Calu3 (cell line): ENCODE measurements at regions of chr11 and their contacts with region 1.

Region 1: DNA sequence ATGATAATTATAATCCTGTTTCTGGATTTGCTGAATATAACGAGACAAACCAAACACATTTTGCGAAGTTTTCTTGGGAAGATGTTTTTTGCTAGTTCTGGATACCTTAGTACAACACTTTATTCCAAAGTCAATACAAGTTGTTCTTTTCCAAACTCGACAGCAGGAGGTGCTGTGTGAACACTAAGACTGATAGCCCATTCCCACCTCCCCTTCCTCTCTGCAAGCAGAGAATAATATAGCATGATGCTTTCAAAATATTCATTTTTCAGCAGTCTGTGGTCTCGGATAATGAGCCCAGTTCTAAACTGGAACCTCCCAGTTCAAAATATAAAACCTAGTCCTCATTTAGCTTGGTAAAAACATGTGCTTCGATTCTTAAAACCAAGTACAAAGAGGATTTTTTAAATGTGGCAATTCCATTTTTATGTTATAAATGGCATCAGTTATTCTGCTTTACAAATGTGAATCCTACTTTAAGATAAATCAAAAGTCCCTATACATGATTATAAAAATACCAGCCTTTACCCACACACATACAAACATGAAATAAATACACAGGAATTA is 129.1 kb downstream of the DCDC1 start:
- DNase-seq: peak; percentile 37
- H3K4me3 Mint-ChIP-seq: no peak overlapping the region
- H3K27ac Mint-ChIP-seq: no peak overlapping the region
- H3K4me1 Mint-ChIP-seq: no peaks in the 10 kb centered on the region
- H3K27me3 Mint-ChIP-seq: no peaks in the 10 kb centered on the region
- CTCF ChIP-seq: peak; percentile 49

Region 2: GRCh38 chr11:31369348-31370329 is 129.2 kb after region 1 on chr11 and contains the starts of genes DCDC1 and DNAJC24:
- CTCF ChIA-PET with region 1: no interaction called
- intact Hi-C with region 1: loop called (anchors 2 kb)
- DNase-seq: peak; percentile 88
- H3K4me3 Mint-ChIP-seq: peak within 1 kb of the TSS; percentile 100
- H3K27ac Mint-ChIP-seq: peak within 1 kb of the TSS; percentile 97
- H3K4me1 Mint-ChIP-seq: no peaks in the 10 kb centered on the region
- H3K27me3 Mint-ChIP-seq: peaks cover 14% of the 10 kb centered on the region
- CTCF ChIP-seq: no peak
- total RNA-seq, gene DCDC1: 0.68 TPM in 1 of 2 replicates, not detected in the other
- total RNA-seq, gene DNAJC24: 14.9 and 17.9 TPM in 2 replicates

Region 3: DNA sequence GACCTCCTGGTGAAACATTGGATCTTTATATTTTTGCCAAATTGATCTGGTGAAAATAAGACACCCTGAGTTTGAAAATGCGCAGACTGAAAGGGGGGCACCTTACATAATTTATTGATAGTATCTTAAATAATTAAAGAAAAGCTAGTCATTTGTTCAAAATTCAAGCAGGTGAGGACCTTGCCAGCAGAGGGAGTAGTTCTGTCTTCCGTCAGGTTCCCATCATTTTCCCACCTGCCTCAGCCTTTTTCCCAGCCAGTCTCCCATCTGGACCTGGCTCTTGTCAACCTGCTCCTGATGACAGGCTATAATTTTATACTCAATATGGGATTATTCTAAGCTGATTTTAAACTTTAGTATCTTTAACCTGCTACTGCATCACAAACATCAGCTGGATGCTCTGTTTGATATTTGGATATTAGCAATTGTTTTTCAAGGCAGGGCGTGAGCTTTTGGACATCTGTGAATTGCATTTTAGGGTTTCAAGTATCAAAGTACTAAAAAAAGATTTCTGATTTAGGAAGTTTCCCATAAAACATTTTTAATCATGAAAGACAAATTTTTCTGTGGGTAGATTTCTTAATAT is 401.1 kb after region 1 on chr11:
- CTCF ChIA-PET with region 1: interaction called, 3 read pairs
- intact Hi-C with region 1: loop called (anchors 10 kb)
- DNase-seq: peak; percentile 55
- H3K4me3 Mint-ChIP-seq: no peak overlapping the region
- H3K27ac Mint-ChIP-seq: no peak overlapping the region
- H3K4me1 Mint-ChIP-seq: no peaks in the 10 kb centered on the region
- H3K27me3 Mint-ChIP-seq: no peaks in the 10 kb centered on the region
- CTCF ChIP-seq: peak; percentile 56

Region 4: GRCh38 chr11:32297611-32298011 is 1057.2 kb after region 1 on chr11:
- CTCF ChIA-PET with region 1: no interaction called
- intact Hi-C with region 1: loop called (anchors 5 kb)
- DNase-seq: peak; percentile 2
- H3K4me3 Mint-ChIP-seq: no peak overlapping the region
- H3K27ac Mint-ChIP-seq: no peak overlapping the region
- H3K4me1 Mint-ChIP-seq: no peaks in the 10 kb centered on the region
- H3K27me3 Mint-ChIP-seq: peaks cover 63% of the 10 kb centered on the region
- CTCF ChIP-seq: peak; percentile 27